ENCODE measurements at regions of chr3 and their contacts with region 1.

Region 1: DNA sequence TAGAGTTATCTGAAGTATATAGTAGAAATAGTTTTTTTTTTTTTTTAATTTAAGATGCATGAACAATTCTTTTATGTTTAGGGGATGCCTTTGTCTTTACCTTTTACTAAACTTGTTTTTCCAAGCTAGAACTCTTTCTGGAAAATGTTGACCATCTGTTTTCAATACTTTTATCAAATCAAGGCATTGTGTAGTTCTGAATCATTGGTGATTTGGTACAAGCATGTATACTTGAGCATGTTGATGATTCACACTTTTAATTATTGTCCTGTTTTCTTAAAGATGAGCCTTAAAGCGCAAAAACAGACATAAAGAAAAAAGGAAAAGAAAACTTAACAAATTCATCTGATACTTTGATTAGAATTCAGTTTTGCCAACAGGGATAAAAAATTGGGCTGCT is 28.3 kb downstream of the PDCD6IP start:
- DNase-seq: no peak
- H3K4me3 ChIP-seq: no peak overlapping the region
- H3K4me3 Mint-ChIP-seq: no peak overlapping the region
- H3K27ac Mint-ChIP-seq: no peak overlapping the region
- H3K4me1 ChIP-seq: no peaks in the 10 kb centered on the region
- H3K4me1 Mint-ChIP-seq: no peaks in the 10 kb centered on the region
- H3K27me3 ChIP-seq: no peaks in the 10 kb centered on the region
- H3K27me3 Mint-ChIP-seq: no peaks in the 10 kb centered on the region
- CTCF ChIP-seq: no peak

Region 2: GRCh38 chr3:33798099-33798410 is 28.6 kb before region 1 on chr3:
- CTCF ChIA-PET with region 1: no interaction called
- POLR2A ChIA-PET with region 1: no interaction called
- intact Hi-C with region 1: no loop called
- DNase-seq: no peak
- H3K4me3 ChIP-seq: peak overlapping the region; percentile 75
- H3K4me3 Mint-ChIP-seq: peak overlapping the region; percentile 91
- H3K27ac Mint-ChIP-seq: peak overlapping the region; percentile 91
- H3K4me1 ChIP-seq: peaks cover 10% of the 10 kb centered on the region; the same call in 1 of the 2 replicates
- H3K4me1 Mint-ChIP-seq: peaks cover 16% of the 10 kb centered on the region
- H3K27me3 ChIP-seq: no peaks in the 10 kb centered on the region
- H3K27me3 Mint-ChIP-seq: no peaks in the 10 kb centered on the region
- CTCF ChIP-seq: no peak

Region 3: DNA sequence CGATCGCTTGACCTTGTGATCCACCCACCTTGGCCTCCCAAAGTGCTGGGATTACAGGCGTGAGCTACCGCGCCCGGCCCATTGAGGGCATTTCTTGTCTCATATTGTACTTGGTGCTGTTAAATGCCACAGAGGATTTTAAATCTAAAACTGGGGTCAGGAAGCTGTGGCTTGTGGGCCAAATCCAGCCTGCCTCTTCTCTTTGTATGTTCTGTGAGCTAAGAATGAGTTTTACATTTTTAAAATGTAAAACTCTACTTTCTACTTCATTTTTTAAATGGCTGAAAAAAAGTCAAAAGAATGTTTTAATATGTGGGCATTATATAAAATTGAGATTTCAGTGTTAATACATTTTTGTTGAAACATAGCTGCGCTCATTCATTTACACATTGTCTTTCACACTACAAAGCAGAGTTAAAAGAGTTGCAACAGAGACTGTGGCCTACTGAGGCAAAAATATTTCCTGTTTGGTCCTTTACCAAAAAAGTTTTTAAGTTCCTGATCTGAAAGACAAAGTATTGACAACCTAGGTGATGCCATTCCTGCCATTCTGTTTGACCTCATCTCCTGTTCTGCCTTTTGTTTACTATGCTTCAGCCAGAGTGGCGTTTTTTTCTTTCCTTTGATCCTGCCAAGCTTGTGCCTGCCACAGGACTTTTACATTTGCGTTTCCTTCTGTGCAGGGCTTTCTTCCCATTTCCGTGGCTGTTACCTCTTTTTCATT is 22.1 kb after region 1 on chr3:
- CTCF ChIA-PET with region 1: no interaction called
- POLR2A ChIA-PET with region 1: no interaction called
- intact Hi-C with region 1: loop called (anchors 1 kb)
- DNase-seq: no peak
- H3K4me3 ChIP-seq: no peak overlapping the region
- H3K4me3 Mint-ChIP-seq: peak overlapping the region; percentile 28
- H3K27ac Mint-ChIP-seq: no peak overlapping the region
- H3K4me1 ChIP-seq: no peaks in the 10 kb centered on the region
- H3K4me1 Mint-ChIP-seq: peaks cover 7% of the 10 kb centered on the region
- H3K27me3 ChIP-seq: no peaks in the 10 kb centered on the region
- H3K27me3 Mint-ChIP-seq: no peaks in the 10 kb centered on the region
- CTCF ChIP-seq: no peak

Measured in Caco-2 (cell line).